Activated T-helper 2 cell treated with anti-CD3 and anti-CD28 coated beads, Interferon-gamma antibody, Interleukin-2, Interleukin-4, amounts not matched to agents 10 μg/mL and 5 μg/mL and 100 μg/mL, durations not matched to agents 14 hours and 24 hours and 36 hours (primary cell): ENCODE measurements at regions of chr2 and their contacts with region 1.

Region 1: DNA sequence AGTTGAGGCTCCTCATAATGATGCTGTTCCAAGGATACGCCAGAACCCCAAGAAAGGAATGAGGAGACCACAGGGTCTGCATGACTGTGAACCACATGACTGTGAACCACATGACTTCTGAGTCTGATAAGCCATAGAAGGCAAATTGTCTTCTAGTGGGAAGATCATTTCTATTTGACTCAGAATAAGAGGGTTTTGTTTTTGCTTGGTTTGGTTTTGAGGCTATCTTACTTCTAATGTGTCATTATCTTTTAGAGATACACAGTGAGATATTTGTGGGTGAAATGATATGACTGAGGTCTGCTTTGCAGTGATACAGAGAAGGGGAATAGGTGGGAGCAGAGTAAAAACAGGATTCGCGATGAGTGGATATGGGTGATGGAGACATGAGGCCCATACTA is 28.9 kb upstream of the BCL2L11 start:
- DNase-seq: no peak
- H3K4me3 Mint-ChIP-seq: no peak overlapping the region
- H3K27ac Mint-ChIP-seq: peak overlapping the region; percentile 19
- H3K4me1 Mint-ChIP-seq: peaks cover 18% of the 10 kb centered on the region
- H3K27me3 Mint-ChIP-seq: peaks cover 60% of the 10 kb centered on the region

Region 2: DNA sequence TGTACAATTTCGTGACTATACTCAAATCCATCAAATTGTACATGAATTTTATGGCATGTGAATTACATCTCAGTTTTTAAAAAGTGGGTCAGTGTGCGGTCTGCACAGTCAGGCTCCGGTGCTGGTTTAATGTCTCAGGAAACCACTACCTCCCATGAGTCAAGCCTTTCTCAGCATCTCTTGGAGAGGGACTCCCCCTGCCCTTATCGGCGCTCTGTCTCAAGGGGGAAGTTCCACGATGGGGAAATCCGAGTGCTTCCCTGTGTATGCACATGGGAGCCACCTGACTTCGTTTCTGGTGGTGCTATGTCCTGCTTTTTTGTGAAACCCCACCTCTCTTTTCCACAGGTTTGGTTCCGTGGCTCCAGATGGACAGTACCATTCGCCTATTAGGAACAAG is 286.9 kb before region 1 on chr2:
- intact Hi-C with region 1: loop called (anchors 2 kb)
- DNase-seq: no peak
- H3K4me3 Mint-ChIP-seq: no peak overlapping the region
- H3K27ac Mint-ChIP-seq: peak overlapping the region; percentile 22
- H3K4me1 Mint-ChIP-seq: peaks cover 16% of the 10 kb centered on the region
- H3K27me3 Mint-ChIP-seq: peaks cover 41% of the 10 kb centered on the region

Region 3: DNA sequence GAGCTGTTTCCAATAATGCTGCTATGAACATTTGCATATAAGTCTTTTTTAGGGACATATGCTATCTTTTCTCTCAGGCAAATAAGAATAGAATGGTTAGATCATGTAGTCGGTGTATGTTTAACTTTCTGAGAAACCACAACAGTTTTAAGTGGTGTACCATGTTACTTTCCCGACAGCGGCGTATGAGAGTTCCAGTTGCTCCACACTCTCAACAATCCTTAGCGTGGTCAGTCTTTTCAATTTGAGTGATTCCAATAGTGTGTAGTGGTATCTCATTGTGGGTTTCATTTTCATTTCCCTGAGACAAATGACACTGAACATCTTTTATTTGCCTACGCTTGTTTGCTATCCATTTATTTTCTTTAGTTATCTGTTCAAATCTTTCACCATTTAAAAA is 209.9 kb before region 1 on chr2:
- intact Hi-C with region 1: loop called (anchors 5 kb)
- DNase-seq: no peak
- H3K4me3 Mint-ChIP-seq: no peak overlapping the region
- H3K27ac Mint-ChIP-seq: no peak overlapping the region
- H3K4me1 Mint-ChIP-seq: peaks cover 13% of the 10 kb centered on the region
- H3K27me3 Mint-ChIP-seq: peaks cover 46% of the 10 kb centered on the region

Region 4: GRCh38 chr2:111066062-111066593 is 25.7 kb before region 1 on chr2:
- intact Hi-C with region 1: loop called (anchors 1 kb)
- DNase-seq: no peak
- H3K4me3 Mint-ChIP-seq: no peak overlapping the region
- H3K27ac Mint-ChIP-seq: no peak overlapping the region
- H3K4me1 Mint-ChIP-seq: peaks cover 19% of the 10 kb centered on the region
- H3K27me3 Mint-ChIP-seq: peaks cover 44% of the 10 kb centered on the region

Region 5: DNA sequence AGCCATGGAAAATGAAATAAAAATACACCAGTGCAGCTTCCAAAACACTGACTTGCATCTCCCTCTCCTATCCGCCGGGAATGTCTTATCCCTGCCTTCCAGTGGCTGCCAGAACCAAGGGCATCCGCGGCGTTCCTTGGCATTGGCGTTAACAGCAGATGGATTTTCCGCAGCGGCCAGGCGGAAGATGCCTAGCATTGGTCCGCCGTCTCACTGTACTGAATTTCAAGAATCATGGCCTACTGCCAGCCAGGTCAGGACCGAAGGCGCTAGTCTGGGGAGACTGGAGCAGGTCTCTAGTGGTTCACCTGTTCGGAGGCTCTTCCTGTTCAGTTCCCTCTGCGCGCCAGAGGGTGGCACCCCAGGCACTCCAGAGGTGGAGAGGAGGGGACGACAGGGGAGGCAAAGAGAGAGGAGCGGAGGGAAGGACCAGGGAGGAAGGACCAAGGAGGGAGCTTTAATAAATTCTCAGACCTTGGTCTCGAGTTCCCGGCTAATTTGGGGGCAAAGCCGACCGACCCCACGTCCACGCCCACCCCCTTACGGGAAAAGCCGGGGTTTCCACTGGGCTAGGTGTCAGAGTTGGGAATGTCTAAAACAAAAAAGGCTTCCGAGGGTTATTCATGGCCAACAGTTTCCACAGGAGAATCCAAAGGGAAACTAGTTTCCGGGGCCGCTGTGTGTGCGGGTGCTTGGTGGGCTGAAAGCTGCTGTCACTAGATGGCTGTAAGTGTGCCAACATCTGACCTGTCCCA is 25.2 kb after region 1 on chr2:
- intact Hi-C with region 1: loop called (anchors 2 kb)
- DNase-seq: peak; percentile 55
- H3K4me3 Mint-ChIP-seq: peak overlapping the region; percentile 87
- H3K27ac Mint-ChIP-seq: peak overlapping the region; percentile 91
- H3K4me1 Mint-ChIP-seq: peaks cover 35% of the 10 kb centered on the region
- H3K27me3 Mint-ChIP-seq: peaks cover 35% of the 10 kb centered on the region